ENCODE measurements at regions of chr7 and their contacts with region 1.

Region 1: DNA sequence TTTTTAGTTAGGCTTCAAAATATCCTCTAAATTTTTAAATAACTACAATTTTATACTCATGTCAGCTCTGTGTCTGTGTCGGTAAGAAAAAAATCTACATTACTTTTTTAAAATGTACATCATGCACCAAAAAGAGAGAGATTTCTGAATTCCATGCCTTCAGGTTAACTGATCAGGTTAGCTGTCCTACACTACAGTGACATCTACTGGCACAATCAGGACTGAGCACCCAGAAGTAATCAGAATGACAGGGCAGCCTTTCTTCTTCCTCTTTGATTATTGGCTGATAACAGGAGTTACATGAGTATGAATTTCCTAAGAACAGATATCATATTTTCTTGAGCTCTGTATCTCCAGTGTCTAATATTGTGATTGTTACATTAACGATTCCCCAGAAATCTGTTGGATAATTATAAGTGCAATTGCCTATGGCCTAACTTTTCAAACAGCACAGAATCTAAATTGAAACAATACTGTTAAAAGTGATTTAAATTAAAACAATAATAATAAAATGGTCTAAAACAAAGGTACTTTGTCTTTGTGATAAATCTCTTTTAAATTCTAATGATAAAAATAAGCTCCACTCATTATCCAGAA is 41.8 kb upstream of the HYCC1 start:
- DNase-seq: no peak
- H3K4me3 ChIP-seq: no peak overlapping the region
- H3K27me3 ChIP-seq: no peaks in the 10 kb centered on the region
- CTCF ChIP-seq: peak; percentile 84

Region 2: GRCh38 chr7:22559829-22560489 is 495.7 kb before region 1 on chr7:
- CTCF ChIA-PET with region 1: interaction called, 61 read pairs
- POLR2A ChIA-PET with region 1: no interaction called
- DNase-seq: no peak
- H3K4me3 ChIP-seq: no peak overlapping the region
- H3K27me3 ChIP-seq: no peaks in the 10 kb centered on the region
- CTCF ChIP-seq: peak; percentile 88

Region 3: DNA sequence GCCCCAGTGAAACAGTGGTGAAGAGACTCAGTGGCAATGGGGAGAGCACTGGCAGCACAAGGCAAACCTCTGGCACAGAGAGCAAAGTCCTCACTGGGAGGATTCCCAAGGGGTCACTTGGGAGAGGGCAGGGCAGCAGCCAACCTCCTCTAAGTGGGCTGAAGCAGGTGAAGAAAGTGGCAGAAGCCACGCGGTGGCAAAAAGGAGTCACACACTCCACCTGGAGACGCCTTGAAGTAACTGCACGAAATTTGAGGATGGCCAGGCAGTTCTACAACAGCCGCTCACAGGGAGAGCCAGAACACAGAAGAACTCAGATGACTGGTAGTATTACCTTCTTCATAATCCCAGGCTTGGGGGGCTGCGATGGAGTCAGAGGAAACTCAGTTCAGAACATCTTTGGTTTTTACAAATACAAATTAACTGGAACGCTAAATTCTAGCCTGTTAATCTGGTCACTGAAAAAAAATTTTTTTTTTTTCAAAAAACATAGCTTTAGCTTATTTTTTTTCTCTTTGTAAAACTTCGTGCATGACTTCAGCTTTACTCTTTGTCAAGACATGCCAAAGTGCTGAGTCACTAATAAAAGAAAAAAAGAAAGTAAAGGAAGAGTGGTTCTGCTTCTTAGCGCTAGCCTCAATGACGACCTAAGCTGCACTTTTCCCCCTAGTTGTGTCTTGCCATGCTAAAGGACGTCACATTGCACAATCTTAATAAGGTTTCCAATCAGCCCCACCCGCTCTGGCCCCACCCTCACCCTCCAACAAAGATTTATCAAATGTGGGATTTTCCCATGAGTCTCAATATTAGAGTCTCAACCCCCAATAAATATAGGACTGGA is 329.1 kb before region 1 on chr7:
- CTCF ChIA-PET with region 1: interaction called, 11 read pairs
- POLR2A ChIA-PET with region 1: no interaction called
- DNase-seq: peak; percentile 79
- H3K4me3 ChIP-seq: peak overlapping the region; percentile 62
- H3K27me3 ChIP-seq: no peaks in the 10 kb centered on the region
- CTCF ChIP-seq: peak; percentile 68

Region 4: GRCh38 chr7:22860784-22861482 is 194.7 kb before region 1 on chr7:
- CTCF ChIA-PET with region 1: interaction called, 11 read pairs
- POLR2A ChIA-PET with region 1: no interaction called
- DNase-seq: no peak
- H3K4me3 ChIP-seq: no peak overlapping the region
- H3K27me3 ChIP-seq: no peaks in the 10 kb centered on the region
- CTCF ChIP-seq: peak; percentile 33; the same call in 1 of the 2 replicates

Region 5: DNA sequence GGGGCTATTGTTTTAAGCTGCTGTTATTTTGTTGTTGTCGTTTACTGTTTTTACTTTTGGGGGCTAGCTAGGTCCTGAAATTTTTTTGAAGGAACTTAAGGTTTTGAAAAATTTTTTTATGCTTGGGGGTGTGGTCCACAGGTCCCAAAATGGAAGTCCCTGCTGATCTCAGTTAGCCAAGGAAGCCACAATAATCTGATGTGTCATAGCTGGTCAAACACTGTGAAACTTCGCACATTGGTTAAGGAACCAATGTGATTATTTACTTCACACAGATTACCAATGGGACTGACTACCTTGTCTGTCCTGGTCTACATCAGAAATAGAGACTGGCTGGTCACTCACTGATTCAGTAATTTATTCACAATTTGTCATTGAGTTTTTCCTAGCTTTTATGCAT is 12.2 kb before region 1 on chr7:
- CTCF ChIA-PET with region 1: interaction called, 16 read pairs
- POLR2A ChIA-PET with region 1: no interaction called
- DNase-seq: no peak
- H3K4me3 ChIP-seq: no peak overlapping the region
- H3K27me3 ChIP-seq: no peaks in the 10 kb centered on the region
- CTCF ChIP-seq: no peak

Region 6: GRCh38 chr7:23067271-23067670 is 11.6 kb after region 1 on chr7:
- CTCF ChIA-PET with region 1: interaction called, 14 read pairs
- POLR2A ChIA-PET with region 1: no interaction called
- DNase-seq: no peak
- H3K4me3 ChIP-seq: no peak overlapping the region
- H3K27me3 ChIP-seq: no peaks in the 10 kb centered on the region
- CTCF ChIP-seq: no peak

Region 7: GRCh38 chr7:23117841-23118240 is 62.2 kb after region 1 on chr7:
- CTCF ChIA-PET with region 1: no interaction called
- POLR2A ChIA-PET with region 1: no interaction called
- DNase-seq: no peak
- H3K4me3 ChIP-seq: no peak overlapping the region
- H3K27me3 ChIP-seq: no peaks in the 10 kb centered on the region
- CTCF ChIP-seq: no peak

Measured in BJ (cell line).